ENCODE measurements at regions of chr5 and their contacts with region 1.

Region 1: GRCh38 chr5:68287976-68288706 is 72.6 kb downstream of the PIK3R1 start:
- DNase-seq: peak; percentile 70
- H3K4me3 Mint-ChIP-seq: peak overlapping the region; percentile 79
- H3K27ac Mint-ChIP-seq: peak overlapping the region; percentile 96
- H3K4me1 Mint-ChIP-seq: peaks cover 83% of the 10 kb centered on the region
- H3K27me3 Mint-ChIP-seq: no peaks in the 10 kb centered on the region

Region 2: GRCh38 chr5:68303038-68303738 is 15.0 kb after region 1 on chr5:
- CTCF ChIA-PET with region 1: interaction called, 16 read pairs
- DNase-seq: no peak
- H3K4me3 Mint-ChIP-seq: no peak overlapping the region
- H3K27ac Mint-ChIP-seq: peak overlapping the region; percentile 6
- H3K4me1 Mint-ChIP-seq: peaks cover 3% of the 10 kb centered on the region
- H3K27me3 Mint-ChIP-seq: peaks cover 3% of the 10 kb centered on the region

Region 3: DNA sequence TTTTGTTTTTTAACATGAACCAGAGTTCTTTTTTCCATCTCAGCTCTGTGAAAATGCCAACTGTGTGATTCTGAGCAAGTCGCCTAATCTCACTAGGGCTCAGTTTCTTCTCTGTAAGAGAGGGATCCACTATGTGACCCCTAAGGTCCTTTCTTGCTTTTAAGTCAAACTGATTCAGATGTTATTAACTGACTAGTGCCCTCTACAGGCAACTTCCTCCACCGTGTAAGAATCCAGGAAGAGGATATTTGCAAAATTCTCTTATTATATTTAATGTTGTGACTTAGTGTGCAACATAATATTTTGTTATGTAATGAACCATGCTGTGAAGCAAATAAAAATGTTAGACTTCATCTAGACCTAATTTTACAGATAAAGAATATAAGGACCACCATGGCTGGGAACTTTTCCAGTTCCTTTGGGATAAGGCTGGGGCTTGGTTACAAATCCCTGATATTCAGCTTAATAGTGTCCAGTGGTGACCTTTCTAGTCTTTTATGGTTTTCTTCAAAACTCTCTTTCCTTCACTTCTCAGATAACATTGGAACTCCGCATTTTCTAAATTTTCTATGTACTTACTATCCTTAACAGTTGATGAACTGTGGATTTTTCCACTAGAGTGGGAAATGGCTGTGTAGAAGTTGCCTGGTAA is 172.1 kb after region 1 on chr5:
- CTCF ChIA-PET with region 1: interaction called, 87 read pairs
- DNase-seq: peak; percentile 55
- H3K4me3 Mint-ChIP-seq: no peak overlapping the region
- H3K27ac Mint-ChIP-seq: no peak overlapping the region
- H3K4me1 Mint-ChIP-seq: peaks cover 16% of the 10 kb centered on the region
- H3K27me3 Mint-ChIP-seq: no peaks in the 10 kb centered on the region